PC-9 (cell line): ENCODE measurements at regions of chr11 and their contacts with region 1.

Region 1: GRCh38 chr11:66311965-66312548 is 4.8 kb downstream of the CD248 start:
- DNase-seq: peak; percentile 88 to 89
- H3K4me3 ChIP-seq: peak overlapping the region; percentile 66
- H3K27ac ChIP-seq: peak overlapping the region; percentile 45; the same call in 1 of the 2 replicates
- H3K4me1 ChIP-seq: peaks cover 6% of the 10 kb centered on the region
- H3K27me3 ChIP-seq: peaks cover 18% of the 10 kb centered on the region
- CTCF ChIP-seq: peak; percentile 95

Region 2: GRCh38 chr11:66011239-66011784 is 300.7 kb before region 1 on chr11:
- CTCF ChIA-PET with region 1: no interaction called
- POLR2A ChIA-PET with region 1: interaction called, 18 read pairs
- intact Hi-C with region 1: no loop called
- DNase-seq: peak; percentile 94 to 100
- H3K4me3 ChIP-seq: peak overlapping the region; percentile 52
- H3K27ac ChIP-seq: peak overlapping the region; percentile 66
- H3K4me1 ChIP-seq: peaks cover 64% of the 10 kb centered on the region
- H3K27me3 ChIP-seq: no peaks in the 10 kb centered on the region
- CTCF ChIP-seq: no peak

Region 3: DNA sequence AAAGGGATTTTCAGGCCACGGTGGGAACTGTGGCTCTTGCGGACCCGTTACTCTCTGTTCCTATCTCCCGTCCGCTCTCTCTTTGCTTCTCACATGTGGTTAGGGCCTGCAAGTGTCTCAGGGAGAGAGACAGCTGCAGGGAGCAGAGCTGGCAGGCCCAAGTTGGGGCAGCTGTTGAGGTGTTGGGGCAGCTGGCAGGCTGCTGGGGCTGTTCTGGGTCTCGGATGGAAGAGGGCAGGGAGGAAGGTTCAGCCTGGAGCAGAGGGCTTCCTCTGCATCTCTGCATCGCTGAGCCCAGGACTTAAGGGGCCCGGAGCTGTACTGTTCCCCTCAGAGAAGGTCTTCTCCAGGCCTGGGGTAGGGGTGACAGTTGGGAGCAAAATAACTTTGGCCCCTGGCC is 36.7 kb before region 1 on chr11:
- CTCF ChIA-PET with region 1: no interaction called
- POLR2A ChIA-PET with region 1: no interaction called
- intact Hi-C with region 1: no loop called
- DNase-seq: no peak
- H3K4me3 ChIP-seq: no peak overlapping the region
- H3K27ac ChIP-seq: no peak overlapping the region
- H3K4me1 ChIP-seq: no peaks in the 10 kb centered on the region
- H3K27me3 ChIP-seq: no peaks in the 10 kb centered on the region
- CTCF ChIP-seq: no peak

Region 4: DNA sequence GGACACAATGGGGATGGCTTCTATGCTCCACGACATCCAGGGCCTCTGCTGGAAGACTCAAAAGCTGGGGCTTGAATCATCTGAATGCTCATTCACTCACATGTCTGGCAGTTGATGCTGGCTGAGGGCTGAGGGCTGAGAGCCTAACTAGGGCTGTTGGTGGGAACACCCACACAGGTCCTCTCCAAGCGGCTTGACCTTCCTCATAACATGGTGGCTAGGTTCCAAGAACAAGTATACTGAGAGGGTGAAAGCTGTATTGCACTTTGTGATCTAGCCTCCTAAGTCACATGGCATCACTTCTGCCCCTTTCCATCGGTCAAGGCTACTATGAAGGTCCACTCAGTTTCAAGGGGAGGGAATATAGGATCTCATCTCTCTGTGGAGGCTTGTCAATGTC is 12.9 kb before region 1 on chr11:
- CTCF ChIA-PET with region 1: no interaction called
- POLR2A ChIA-PET with region 1: interaction called, 13 read pairs
- intact Hi-C with region 1: no loop called
- DNase-seq: no peak
- H3K4me3 ChIP-seq: no peak overlapping the region
- H3K27ac ChIP-seq: no peak overlapping the region
- H3K4me1 ChIP-seq: no peaks in the 10 kb centered on the region
- H3K27me3 ChIP-seq: peaks cover 11% of the 10 kb centered on the region; the same call in 1 of the 2 replicates
- CTCF ChIP-seq: no peak

Region 5: GRCh38 chr11:66336234-66337102 is 24.4 kb after region 1 on chr11 and contains the start of gene RIN1:
- CTCF ChIA-PET with region 1: interaction called, 30 read pairs
- POLR2A ChIA-PET with region 1: interaction called, 46 read pairs
- intact Hi-C with region 1: loop called (anchors 1 kb)
- DNase-seq: peak; percentile 90 to 92
- H3K4me3 ChIP-seq: peak within 1 kb of the TSS; percentile 79
- H3K27ac ChIP-seq: peak within 1 kb of the TSS; percentile 65
- H3K4me1 ChIP-seq: peaks cover 16% of the 10 kb centered on the region
- H3K27me3 ChIP-seq: no peaks in the 10 kb centered on the region
- CTCF ChIP-seq: peak; percentile 52
- total RNA-seq, gene RIN1: 15.5 and 19.5 TPM in 2 replicates

Region 6: DNA sequence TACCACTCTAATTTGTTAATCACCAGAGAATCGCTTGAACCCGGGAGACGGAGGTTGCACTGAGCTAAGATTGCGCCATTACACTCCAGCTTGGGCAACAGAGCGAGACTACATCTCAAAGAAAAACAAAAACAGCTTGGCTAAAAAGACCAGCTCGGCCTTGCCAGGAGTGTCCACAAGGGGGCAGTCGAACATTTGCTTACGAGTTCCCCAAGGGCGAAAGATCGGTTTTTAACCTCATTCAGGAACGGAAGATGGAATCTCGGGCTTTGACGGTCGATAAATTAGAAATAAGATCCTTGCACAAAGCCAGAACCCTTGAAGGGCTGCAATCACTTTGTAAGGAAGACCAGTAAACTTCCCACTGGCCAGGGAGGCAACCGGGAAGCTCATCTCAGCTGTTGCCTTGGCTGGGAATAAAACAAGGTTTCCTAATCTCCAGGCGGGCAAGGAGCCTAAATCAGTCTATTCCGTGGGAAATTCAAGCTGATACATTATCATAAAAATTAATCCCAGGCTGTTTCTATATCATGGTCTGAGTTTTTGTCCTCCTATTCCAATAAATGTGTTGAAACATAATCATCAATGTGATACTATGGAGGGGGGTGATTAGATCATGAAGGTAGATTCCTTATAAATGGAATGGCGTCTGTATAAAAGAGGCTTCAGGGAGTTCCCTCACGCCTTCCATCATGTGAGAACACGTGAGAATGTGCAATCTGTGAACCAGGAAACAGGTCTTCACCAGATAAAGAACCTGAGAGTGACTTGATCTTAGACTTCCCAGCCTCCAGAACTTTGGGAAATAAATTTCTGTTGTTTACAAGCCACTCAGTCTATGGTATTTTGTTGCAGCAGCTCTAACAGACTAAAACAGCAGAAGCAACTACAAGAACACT is 74.4 kb after region 1 on chr11:
- CTCF ChIA-PET with region 1: interaction called, 15 read pairs
- POLR2A ChIA-PET with region 1: interaction called, 11 read pairs
- intact Hi-C with region 1: loop called (anchors 1 kb)
- DNase-seq: peak; percentile 79 to 82
- H3K4me3 ChIP-seq: peak overlapping the region; percentile 37; the same call in 1 of the 2 replicates
- H3K27ac ChIP-seq: no peak overlapping the region
- H3K4me1 ChIP-seq: no peaks in the 10 kb centered on the region
- H3K27me3 ChIP-seq: peaks cover 6% of the 10 kb centered on the region; the same call in 1 of the 2 replicates
- CTCF ChIP-seq: peak; percentile 97

Region 7: GRCh38 chr11:67099831-67100324 is 787.8 kb after region 1 on chr11:
- CTCF ChIA-PET with region 1: no interaction called
- POLR2A ChIA-PET with region 1: interaction called, 11 read pairs
- intact Hi-C with region 1: no loop called
- DNase-seq: no peak
- H3K4me3 ChIP-seq: no peak overlapping the region
- H3K27ac ChIP-seq: no peak overlapping the region
- H3K4me1 ChIP-seq: no peaks in the 10 kb centered on the region
- H3K27me3 ChIP-seq: no peaks in the 10 kb centered on the region
- CTCF ChIP-seq: no peak